BJ (cell line): ENCODE measurements at regions of chr16 and their contacts with region 1.

Region 1: GRCh38 chr16:29926005-29926710 is at the start of gene KCTD13:
- DNase-seq: peak; percentile 30
- H3K4me3 ChIP-seq: peak within 1 kb of the TSS; percentile 64
- H3K27me3 ChIP-seq: no peaks in the 10 kb centered on the region
- CTCF ChIP-seq: no peak
- polyA plus RNA-seq, gene KCTD13: 8.2 and 12.3 TPM in 2 replicates

Region 2: DNA sequence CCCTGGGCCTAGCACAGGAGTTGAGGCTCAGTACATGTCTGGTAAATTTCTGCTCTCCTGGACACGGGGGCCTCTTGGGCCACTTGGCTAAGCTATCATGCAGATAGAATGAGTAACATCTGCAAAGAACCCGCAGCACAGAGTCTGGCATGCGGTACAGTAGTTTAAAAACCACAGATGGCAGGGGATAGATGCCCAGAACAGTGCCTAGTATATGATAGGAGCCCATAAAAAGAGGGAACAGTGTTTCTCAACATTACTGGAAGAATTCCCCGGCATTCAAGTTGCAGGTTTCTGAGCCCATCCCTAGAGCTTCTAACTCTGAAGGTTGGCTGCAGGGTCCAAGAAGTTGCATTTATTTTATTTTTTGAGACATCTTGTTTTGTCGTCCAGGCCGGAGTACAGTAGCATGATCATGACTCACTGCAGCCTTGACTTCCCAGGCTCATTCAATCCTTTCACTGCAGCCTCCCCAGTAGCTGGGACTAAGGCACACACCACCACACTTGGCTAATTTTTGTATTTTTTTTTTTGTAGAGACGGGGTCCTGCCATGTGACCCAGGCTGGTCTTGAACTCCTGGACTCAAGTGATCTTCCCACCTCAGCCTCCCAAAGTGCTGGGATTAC is 68.9 kb before region 1 on chr16:
- CTCF ChIA-PET with region 1: no interaction called
- POLR2A ChIA-PET with region 1: interaction called, 13 read pairs
- DNase-seq: peak; percentile 73
- H3K4me3 ChIP-seq: no peak overlapping the region
- H3K27me3 ChIP-seq: no peaks in the 10 kb centered on the region
- CTCF ChIP-seq: no peak

Region 3: DNA sequence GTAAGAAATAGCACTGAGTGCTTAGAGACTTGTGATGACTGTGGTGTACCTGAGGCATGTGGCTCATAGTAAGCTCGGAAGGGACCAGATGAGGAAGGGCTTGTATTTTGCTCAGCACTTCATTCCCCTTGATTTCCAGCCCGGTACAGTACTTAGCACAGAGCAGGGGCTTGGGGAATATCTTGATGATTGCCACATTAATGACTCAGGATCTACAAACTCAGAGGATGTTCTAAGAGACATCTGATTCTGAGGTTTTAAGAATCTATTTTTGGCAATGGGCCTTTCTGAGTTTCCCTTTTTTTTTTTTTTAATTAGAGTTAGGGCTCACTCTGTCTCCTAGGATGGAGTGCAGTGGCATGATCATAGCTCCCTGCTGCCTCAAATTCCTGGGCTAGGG is 16.8 kb before region 1 on chr16:
- CTCF ChIA-PET with region 1: interaction called, 5 read pairs
- POLR2A ChIA-PET with region 1: interaction called, 15 read pairs
- DNase-seq: no peak
- H3K4me3 ChIP-seq: no peak overlapping the region
- H3K27me3 ChIP-seq: no peaks in the 10 kb centered on the region
- CTCF ChIP-seq: no peak

Region 4: GRCh38 chr16:29915590-29916247 is 10.4 kb before region 1 on chr16:
- CTCF ChIA-PET with region 1: interaction called, 14 read pairs
- POLR2A ChIA-PET with region 1: no interaction called
- DNase-seq: no peak
- H3K4me3 ChIP-seq: no peak overlapping the region
- H3K27me3 ChIP-seq: no peaks in the 10 kb centered on the region
- CTCF ChIP-seq: no peak

Region 5: DNA sequence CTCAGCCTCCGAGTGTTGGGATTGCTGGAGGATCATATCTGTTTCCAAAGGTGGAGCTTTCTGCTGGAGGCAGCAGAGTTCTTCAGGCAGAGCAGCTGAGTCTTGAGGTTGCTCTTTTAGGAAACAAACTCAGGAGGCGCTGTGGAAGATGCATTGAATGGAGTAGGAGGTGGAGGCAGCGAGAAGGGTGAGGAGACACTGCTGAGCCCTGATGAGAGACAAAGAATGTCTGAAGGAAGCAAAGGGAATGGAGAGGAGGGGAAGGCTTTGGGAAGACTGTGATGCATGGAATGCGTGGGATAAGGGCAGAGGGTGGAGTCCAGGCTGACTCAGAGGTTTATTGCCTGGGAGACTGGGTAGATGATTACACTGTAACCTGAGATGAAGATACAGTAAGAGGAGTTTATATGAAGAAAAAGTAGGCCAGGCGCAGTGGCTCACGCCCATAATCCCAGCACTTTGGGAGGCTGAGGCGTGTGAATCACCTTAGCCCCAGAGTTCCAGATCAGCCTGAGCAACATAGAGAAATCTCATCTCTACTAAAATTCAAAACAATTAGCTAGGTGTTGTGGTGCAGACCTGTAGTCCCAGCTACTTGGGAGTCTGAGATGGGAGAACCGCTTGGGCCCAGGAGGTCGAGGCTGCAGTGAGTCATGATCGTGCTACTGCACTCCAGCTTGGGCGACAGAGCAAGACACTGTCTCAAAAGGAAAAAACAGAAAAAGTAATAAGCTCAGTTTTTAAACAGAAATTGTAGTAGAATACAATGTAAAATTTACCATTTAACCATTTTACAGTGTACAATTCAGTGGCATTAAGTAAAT is 17.9 kb after region 1 on chr16:
- CTCF ChIA-PET with region 1: interaction called, 10 read pairs
- POLR2A ChIA-PET with region 1: interaction called, 10 read pairs
- DNase-seq: peak; percentile 99
- H3K4me3 ChIP-seq: no peak overlapping the region
- H3K27me3 ChIP-seq: no peaks in the 10 kb centered on the region
- CTCF ChIP-seq: peak; percentile 58